Esophagus squamous epithelium (tissue), 5 donors: ENCODE measurements at regions of chr7 and their contacts with region 1.

Region 1: GRCh38 chr7:92609921-92610518 is 19.8 kb upstream of the FAM133B start:
- DNase-seq: no peak
- H3K4me3 ChIP-seq: no peak overlapping the region
- H3K27ac ChIP-seq: no peak overlapping the region
- H3K4me1 ChIP-seq: peaks cover 0 to 8% (median 0%) of the 10 kb centered on the region in 3 donors
- H3K27me3 ChIP-seq: no peaks in the 10 kb centered on the region
- CTCF ChIP-seq: peak in 3 of 6 experiments; percentile 31 to 50 (median 38)
- POLR2A ChIP-seq: no peak

Region 2: GRCh38 chr7:93043385-93043985 is 433.5 kb after region 1 on chr7:
- intact Hi-C with region 1: loop called (anchors 10 kb)
- DNase-seq: no peak
- H3K4me3 ChIP-seq: peak overlapping the region; percentile 6 to 60 (median 26)
- H3K27ac ChIP-seq: no peak overlapping the region
- H3K4me1 ChIP-seq: peaks cover 0 to 9% (median 5%) of the 10 kb centered on the region in 3 donors
- H3K27me3 ChIP-seq: peaks cover 0 to 4% (median 0%) of the 10 kb centered on the region in 4 donors
- CTCF ChIP-seq: no peak
- POLR2A ChIP-seq: no peak